PC-9 (cell line): ENCODE measurements at regions of chr11 and their contacts with region 1.

Region 1: GRCh38 chr11:92399705-92400104 is 175.1 kb downstream of the FAT3 start:
- DNase-seq: no peak
- H3K4me3 ChIP-seq: no peak overlapping the region
- H3K27ac ChIP-seq: no peak overlapping the region
- H3K4me1 ChIP-seq: no peaks in the 10 kb centered on the region
- H3K27me3 ChIP-seq: no peaks in the 10 kb centered on the region
- CTCF ChIP-seq: no peak

Region 2: DNA sequence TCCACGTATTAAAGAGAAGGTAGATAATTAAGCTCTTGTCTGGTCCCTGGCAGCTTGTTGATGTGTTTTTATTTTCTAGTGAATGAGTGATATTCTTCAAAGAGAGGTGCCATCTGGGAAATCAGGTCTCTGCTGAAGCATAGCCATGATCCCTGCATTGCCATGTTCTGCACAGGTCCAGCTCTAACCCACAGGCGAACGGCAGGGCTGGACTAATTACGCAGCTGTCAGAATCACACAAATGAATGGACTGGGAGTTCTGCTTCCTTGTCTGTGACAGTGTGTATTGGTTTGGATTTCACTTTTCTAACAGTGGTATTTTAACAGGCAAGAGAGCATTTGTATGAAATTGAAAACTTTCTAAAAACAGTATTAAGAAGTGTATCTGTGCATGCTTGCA is 60.5 kb after region 1 on chr11:
- CTCF ChIA-PET with region 1: no interaction called
- POLR2A ChIA-PET with region 1: interaction called, 13 read pairs
- intact Hi-C with region 1: no loop called
- DNase-seq: no peak
- H3K4me3 ChIP-seq: no peak overlapping the region
- H3K27ac ChIP-seq: no peak overlapping the region
- H3K4me1 ChIP-seq: no peaks in the 10 kb centered on the region
- H3K27me3 ChIP-seq: no peaks in the 10 kb centered on the region
- CTCF ChIP-seq: no peak

Region 3: GRCh38 chr11:92495107-92495793 is 95.5 kb after region 1 on chr11:
- CTCF ChIA-PET with region 1: no interaction called
- POLR2A ChIA-PET with region 1: no interaction called
- intact Hi-C with region 1: no loop called
- DNase-seq: no peak
- H3K4me3 ChIP-seq: no peak overlapping the region
- H3K27ac ChIP-seq: no peak overlapping the region
- H3K4me1 ChIP-seq: no peaks in the 10 kb centered on the region
- H3K27me3 ChIP-seq: no peaks in the 10 kb centered on the region
- CTCF ChIP-seq: no peak

Region 4: DNA sequence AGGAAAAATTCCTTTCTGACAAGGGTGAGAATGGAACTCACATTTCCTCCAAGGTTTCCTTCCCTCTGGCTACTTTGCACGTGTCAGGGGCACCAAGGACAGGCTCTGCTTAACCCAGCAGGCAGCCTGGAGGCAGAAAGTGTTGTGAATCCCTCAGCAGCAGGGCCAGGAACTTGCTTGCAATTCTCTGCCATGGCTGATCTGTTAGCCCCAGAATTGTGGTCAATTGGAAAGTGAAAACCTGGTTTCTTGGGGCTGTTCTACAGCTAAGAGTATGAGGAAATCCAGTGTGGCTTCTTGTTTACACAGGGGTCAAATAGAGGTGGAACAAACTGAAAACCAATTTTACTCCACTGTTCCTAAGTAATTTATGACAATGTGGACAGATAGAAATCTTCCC is 1223.5 kb after region 1 on chr11:
- CTCF ChIA-PET with region 1: no interaction called
- POLR2A ChIA-PET with region 1: interaction called, 10 read pairs
- intact Hi-C with region 1: no loop called
- DNase-seq: peak; percentile 20 to 56
- H3K4me3 ChIP-seq: no peak overlapping the region
- H3K27ac ChIP-seq: no peak overlapping the region
- H3K4me1 ChIP-seq: no peaks in the 10 kb centered on the region
- H3K27me3 ChIP-seq: no peaks in the 10 kb centered on the region; the same call in 1 of the 2 replicates
- CTCF ChIP-seq: no peak